Activated CD4-positive, alpha-beta T cell treated with anti-CD3 and anti-CD28 coated beads for 36 hours (primary cell): ENCODE measurements at regions of chrX and their contacts with region 1.

Region 1: GRCh38 chrX:475926-476723 is 89.4 kb upstream of the PPP2R3B start:
- DNase-seq: no peak
- ATAC-seq: no peak
- H3K4me3 Mint-ChIP-seq: no peak overlapping the region
- H3K27ac Mint-ChIP-seq: no peak overlapping the region
- H3K4me1 Mint-ChIP-seq: no peaks in the 10 kb centered on the region
- H3K27me3 Mint-ChIP-seq: no peaks in the 10 kb centered on the region

Region 2: GRCh38 chrX:538316-538715 is 62.2 kb after region 1 on chrX:
- CTCF ChIA-PET with region 1: no interaction called
- POLR2A ChIA-PET with region 1: no interaction called
- intact Hi-C with region 1: loop called in 1 of 2 experiments (anchors 10 kb)
- DNase-seq: no peak
- ATAC-seq: no peak
- H3K4me3 Mint-ChIP-seq: no peak overlapping the region
- H3K27ac Mint-ChIP-seq: no peak overlapping the region
- H3K4me1 Mint-ChIP-seq: no peaks in the 10 kb centered on the region
- H3K27me3 Mint-ChIP-seq: no peaks in the 10 kb centered on the region